PC-9 (cell line): ENCODE measurements at regions of chr9 and their contacts with region 1.

Region 1: GRCh38 chr9:113340017-113340699 is at the start of gene WDR31:
- DNase-seq: peak; percentile 68 to 93
- H3K4me3 ChIP-seq: peak within 1 kb of the TSS; percentile 80
- H3K27ac ChIP-seq: peak within 1 kb of the TSS; percentile 81
- H3K4me1 ChIP-seq: peaks cover 43% of the 10 kb centered on the region
- H3K27me3 ChIP-seq: no peaks in the 10 kb centered on the region
- CTCF ChIP-seq: no peak
- total RNA-seq, gene WDR31: 11.2 and 12.9 TPM in 2 replicates

Region 2: DNA sequence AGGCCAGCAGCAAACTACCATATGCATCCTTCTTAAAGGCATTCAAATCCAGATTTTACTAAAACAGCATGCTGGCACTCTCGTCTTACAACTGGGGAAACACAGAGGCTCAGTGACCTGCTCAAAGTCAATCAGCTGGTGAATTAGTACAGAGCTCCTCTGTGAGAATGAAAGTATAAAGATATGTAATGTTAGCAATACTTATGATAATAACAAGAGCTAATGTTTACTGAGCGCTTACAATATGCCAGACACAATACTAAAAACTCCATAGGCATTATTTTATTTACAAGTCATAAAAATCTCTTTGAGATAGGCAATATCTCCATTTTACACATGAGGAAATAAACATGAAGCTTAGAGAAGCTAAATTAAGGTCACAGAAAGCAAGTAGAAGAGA is 147.7 kb before region 1 on chr9:
- CTCF ChIA-PET with region 1: no interaction called
- POLR2A ChIA-PET with region 1: no interaction called
- intact Hi-C with region 1: no loop called
- DNase-seq: no peak
- H3K4me3 ChIP-seq: no peak overlapping the region
- H3K27ac ChIP-seq: no peak overlapping the region
- H3K4me1 ChIP-seq: peaks cover 14% of the 10 kb centered on the region
- H3K27me3 ChIP-seq: no peaks in the 10 kb centered on the region
- CTCF ChIP-seq: no peak

Region 3: DNA sequence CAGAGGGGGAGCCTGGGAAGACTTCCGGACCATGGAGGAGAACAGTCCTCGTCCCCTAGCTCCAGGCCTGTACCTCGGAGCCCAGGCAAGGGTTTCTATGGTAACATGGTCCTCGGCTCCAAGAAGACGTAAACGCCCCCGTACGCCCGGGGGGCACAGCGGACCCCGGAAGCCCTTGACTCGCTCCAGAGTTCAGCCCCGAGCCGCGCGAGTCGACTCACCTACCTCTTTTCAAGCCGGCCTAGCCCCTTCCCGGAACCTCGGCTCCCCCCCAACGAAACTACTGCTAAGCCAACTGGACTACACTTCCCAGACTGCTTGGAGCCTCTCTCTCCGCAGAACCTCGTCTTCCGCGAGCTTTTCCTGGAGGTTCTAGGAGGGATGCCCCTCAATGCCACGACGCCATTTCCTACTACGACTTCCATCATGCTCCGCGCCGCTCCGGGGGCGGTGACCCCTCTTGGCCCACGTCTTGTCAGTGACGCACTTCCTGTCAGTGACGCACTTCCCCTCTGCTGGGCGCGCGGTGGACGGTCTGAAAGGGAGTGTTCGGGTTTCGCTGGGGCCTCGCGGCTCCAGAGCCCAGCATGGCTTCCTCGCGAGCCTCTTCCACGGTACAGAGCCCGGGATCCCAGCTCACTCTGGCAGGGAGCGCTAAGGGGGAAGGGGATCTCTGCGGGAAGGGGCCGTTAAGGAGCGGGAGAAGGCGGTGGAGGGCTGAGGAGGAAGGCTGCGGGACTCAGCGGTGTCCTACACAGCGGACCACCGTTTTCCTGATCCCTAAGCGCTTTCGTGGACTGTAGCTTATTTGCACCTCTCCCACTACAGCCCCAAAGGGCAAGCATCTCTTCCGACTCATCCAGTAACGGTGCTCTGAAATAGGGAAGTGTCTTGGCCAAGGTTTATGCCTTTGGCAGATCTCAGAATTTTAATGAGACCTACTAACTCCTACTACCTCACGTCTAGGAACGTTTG is 64.7 kb before region 1 on chr9 and contains the starts of genes CDC26 and PRPF4:
- CTCF ChIA-PET with region 1: no interaction called
- POLR2A ChIA-PET with region 1: interaction called, 5 read pairs
- intact Hi-C with region 1: loop called (anchors 1 kb)
- DNase-seq: peak; percentile 90 to 94
- H3K4me3 ChIP-seq: peak within 1 kb of the TSS; percentile 81
- H3K27ac ChIP-seq: peak within 1 kb of the TSS; percentile 50
- H3K4me1 ChIP-seq: peaks cover 13% of the 10 kb centered on the region
- H3K27me3 ChIP-seq: no peaks in the 10 kb centered on the region
- CTCF ChIP-seq: no peak
- total RNA-seq, gene CDC26: 40.4 and 43.4 TPM in 2 replicates
- total RNA-seq, gene PRPF4: 31.6 and 36.3 TPM in 2 replicates

Region 4: DNA sequence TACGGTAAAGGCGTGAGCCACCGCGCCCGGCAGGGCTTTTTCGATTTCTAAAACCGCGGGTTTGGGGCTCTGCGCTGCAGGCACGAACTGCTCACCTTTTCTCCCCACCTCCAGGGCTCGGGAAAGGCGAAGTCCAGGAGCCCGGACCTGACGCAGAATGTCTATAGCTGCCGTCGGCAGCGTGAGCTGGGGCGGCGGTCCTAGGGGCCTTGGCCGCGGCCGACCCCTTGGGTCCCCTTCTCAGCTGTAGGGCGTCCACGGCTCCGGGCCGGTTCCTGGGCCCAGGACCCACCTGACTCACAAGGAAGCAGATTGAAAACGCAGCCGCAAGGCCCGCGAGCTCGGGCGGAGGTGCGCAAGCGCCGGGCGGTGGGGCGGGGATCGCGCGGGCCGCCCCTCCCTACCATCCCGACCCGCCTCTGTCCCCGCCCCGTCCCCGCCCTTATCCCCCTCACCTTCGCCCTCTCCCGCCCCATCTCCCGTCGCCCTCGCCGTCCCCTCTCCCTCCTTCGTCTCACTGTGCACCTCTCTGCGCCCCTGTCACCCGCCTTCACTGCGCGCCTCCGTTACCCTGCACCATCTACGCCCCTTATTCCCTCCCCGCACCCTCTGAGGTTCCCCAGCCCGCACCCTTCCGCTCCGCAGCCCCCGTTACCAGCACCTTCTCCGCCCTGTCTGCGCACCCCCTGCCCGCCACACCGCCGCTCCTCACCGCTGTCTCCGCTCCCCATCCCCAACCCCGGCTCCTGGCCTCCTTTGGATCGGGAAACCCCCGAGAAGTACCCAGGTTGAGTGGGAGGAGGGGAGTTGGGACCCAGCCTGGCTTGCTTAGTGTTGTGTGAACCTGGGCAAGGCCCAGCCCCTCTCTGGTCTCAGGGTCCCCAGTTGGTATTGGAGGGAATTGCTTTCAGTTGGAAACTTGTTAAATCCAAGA is 36.7 kb after region 1 on chr9 and contains the start of gene HDHD3:
- CTCF ChIA-PET with region 1: interaction called, 8 read pairs
- POLR2A ChIA-PET with region 1: no interaction called
- intact Hi-C with region 1: loop called (anchors 2 kb)
- DNase-seq: peak; percentile 74 to 78
- H3K4me3 ChIP-seq: peak within 1 kb of the TSS; percentile 76
- H3K27ac ChIP-seq: peak within 1 kb of the TSS; percentile 54
- H3K4me1 ChIP-seq: peaks cover 23% of the 10 kb centered on the region
- H3K27me3 ChIP-seq: no peaks in the 10 kb centered on the region
- CTCF ChIP-seq: no peak
- total RNA-seq, gene HDHD3: 39.5 and 44.0 TPM in 2 replicates

Region 5: GRCh38 chr9:113410207-113410864 is 70.2 kb after region 1 on chr9 and contains the starts of genes C9orf43 and POLE3:
- CTCF ChIA-PET with region 1: no interaction called
- POLR2A ChIA-PET with region 1: interaction called, 4 read pairs
- intact Hi-C with region 1: loop called (anchors 1 kb)
- DNase-seq: peak; percentile 87 to 95
- H3K4me3 ChIP-seq: peak within 1 kb of the TSS; percentile 76
- H3K27ac ChIP-seq: peak within 1 kb of the TSS; percentile 89
- H3K4me1 ChIP-seq: peaks cover 18% of the 10 kb centered on the region
- H3K27me3 ChIP-seq: no peaks in the 10 kb centered on the region
- CTCF ChIP-seq: no peak
- total RNA-seq, gene C9orf43: 1.5 and 2.5 TPM in 2 replicates
- total RNA-seq, gene POLE3: 53.8 and 64.5 TPM in 2 replicates